CD4-positive, alpha-beta memory T cell (primary cell): ENCODE measurements at regions of chr4 and their contacts with region 1.

Region 1: GRCh38 chr4:23135792-23136645 is 443.3 kb downstream of the GBA3 start:
- DNase-seq: peak in 4 of 5 donors; percentile 2 to 7 (median 4)
- H3K4me3 ChIP-seq: no peak overlapping the region
- H3K4me3 Mint-ChIP-seq: no peak overlapping the region
- H3K27ac ChIP-seq: no peak overlapping the region
- H3K27ac Mint-ChIP-seq: no peak overlapping the region
- H3K4me1 ChIP-seq: no peaks in the 10 kb centered on the region
- H3K4me1 Mint-ChIP-seq: no peaks in the 10 kb centered on the region
- H3K27me3 ChIP-seq: no peaks in the 10 kb centered on the region
- H3K27me3 Mint-ChIP-seq: no peaks in the 10 kb centered on the region

Region 2: GRCh38 chr4:22215084-22215483 is 920.9 kb before region 1 on chr4:
- CTCF ChIA-PET with region 1: no interaction called
- POLR2A ChIA-PET with region 1: no interaction called
- intact Hi-C with region 1: no loop called
- DNase-seq: no peak
- H3K4me3 ChIP-seq: no peak overlapping the region
- H3K4me3 Mint-ChIP-seq: no peak overlapping the region
- H3K27ac ChIP-seq: no peak overlapping the region
- H3K27ac Mint-ChIP-seq: no peak overlapping the region
- H3K4me1 ChIP-seq: no peaks in the 10 kb centered on the region
- H3K4me1 Mint-ChIP-seq: no peaks in the 10 kb centered on the region
- H3K27me3 ChIP-seq: no peaks in the 10 kb centered on the region
- H3K27me3 Mint-ChIP-seq: no peaks in the 10 kb centered on the region

Region 3: DNA sequence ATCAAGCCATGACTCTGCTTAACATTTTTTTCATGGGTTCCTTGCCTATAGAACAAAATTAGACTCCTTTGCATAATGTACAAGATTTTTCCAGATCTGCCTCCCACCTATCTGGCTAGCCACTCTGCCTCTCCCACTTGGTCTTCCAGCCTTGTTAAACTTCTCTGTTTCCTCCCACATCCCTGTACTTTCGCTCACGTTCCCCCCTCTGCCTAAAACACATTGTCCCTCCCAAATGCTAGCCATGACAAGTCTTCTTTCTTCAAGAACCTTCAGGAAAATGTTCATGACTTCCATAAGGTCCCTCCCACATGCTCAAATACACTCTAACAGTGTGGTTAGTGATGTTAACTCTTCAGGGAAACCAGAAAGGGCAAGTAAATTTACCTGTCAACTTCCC is 834.8 kb before region 1 on chr4:
- CTCF ChIA-PET with region 1: no interaction called
- POLR2A ChIA-PET with region 1: no interaction called
- intact Hi-C with region 1: no loop called
- DNase-seq: no peak
- H3K4me3 ChIP-seq: no peak overlapping the region
- H3K4me3 Mint-ChIP-seq: no peak overlapping the region
- H3K27ac ChIP-seq: no peak overlapping the region
- H3K27ac Mint-ChIP-seq: peak overlapping the region in 1 of 7 donors; percentile 31
- H3K4me1 ChIP-seq: no peaks in the 10 kb centered on the region
- H3K4me1 Mint-ChIP-seq: no peaks in the 10 kb centered on the region
- H3K27me3 ChIP-seq: no peaks in the 10 kb centered on the region
- H3K27me3 Mint-ChIP-seq: no peaks in the 10 kb centered on the region

Region 4: GRCh38 chr4:22444813-22445212 is 691.2 kb before region 1 on chr4:
- CTCF ChIA-PET with region 1: no interaction called
- POLR2A ChIA-PET with region 1: no interaction called
- intact Hi-C with region 1: no loop called
- DNase-seq: no peak
- H3K4me3 ChIP-seq: no peak overlapping the region
- H3K4me3 Mint-ChIP-seq: peak overlapping the region in 1 of 8 donors; percentile 33
- H3K27ac ChIP-seq: no peak overlapping the region
- H3K27ac Mint-ChIP-seq: no peak overlapping the region
- H3K4me1 ChIP-seq: no peaks in the 10 kb centered on the region
- H3K4me1 Mint-ChIP-seq: peaks cover 0 to 9% (median 1%) of the 10 kb centered on the region in 4 donors
- H3K27me3 ChIP-seq: no peaks in the 10 kb centered on the region
- H3K27me3 Mint-ChIP-seq: no peaks in the 10 kb centered on the region

Region 5: GRCh38 chr4:23105759-23106370 is 30.2 kb before region 1 on chr4:
- CTCF ChIA-PET with region 1: no interaction called
- POLR2A ChIA-PET with region 1: no interaction called
- intact Hi-C with region 1: no loop called
- DNase-seq: no peak
- H3K4me3 ChIP-seq: no peak overlapping the region
- H3K4me3 Mint-ChIP-seq: no peak overlapping the region
- H3K27ac ChIP-seq: no peak overlapping the region
- H3K27ac Mint-ChIP-seq: no peak overlapping the region
- H3K4me1 ChIP-seq: no peaks in the 10 kb centered on the region
- H3K4me1 Mint-ChIP-seq: no peaks in the 10 kb centered on the region
- H3K27me3 ChIP-seq: no peaks in the 10 kb centered on the region
- H3K27me3 Mint-ChIP-seq: no peaks in the 10 kb centered on the region

Region 6: GRCh38 chr4:23717528-23718248 is 581.7 kb after region 1 on chr4:
- CTCF ChIA-PET with region 1: no interaction called
- POLR2A ChIA-PET with region 1: no interaction called
- intact Hi-C with region 1: loop called (anchors 10 kb)
- DNase-seq: peak in 1 of 5 donors; percentile 0
- H3K4me3 ChIP-seq: no peak overlapping the region
- H3K4me3 Mint-ChIP-seq: no peak overlapping the region
- H3K27ac ChIP-seq: no peak overlapping the region
- H3K27ac Mint-ChIP-seq: no peak overlapping the region
- H3K4me1 ChIP-seq: no peaks in the 10 kb centered on the region
- H3K4me1 Mint-ChIP-seq: no peaks in the 10 kb centered on the region
- H3K27me3 ChIP-seq: no peaks in the 10 kb centered on the region
- H3K27me3 Mint-ChIP-seq: no peaks in the 10 kb centered on the region